Activated CD8-positive, alpha-beta memory T cell treated with anti-CD3 and anti-CD28 coated beads, Interleukin-2, amount 10 ng/mL, durations not matched to agents 7 days and 5 days (primary cell): ENCODE measurements at regions of chr7 and their contacts with region 1.

Region 1: GRCh38 chr7:76269895-76270294 is 32.6 kb upstream of the HSPB1 start:
- DNase-seq: no peak
- ATAC-seq: no peak
- H3K4me3 Mint-ChIP-seq: no peak overlapping the region
- H3K27ac Mint-ChIP-seq: no peak overlapping the region
- H3K4me1 Mint-ChIP-seq: peaks cover 29% of the 10 kb centered on the region
- H3K27me3 Mint-ChIP-seq: peaks cover 34% of the 10 kb centered on the region

Region 2: DNA sequence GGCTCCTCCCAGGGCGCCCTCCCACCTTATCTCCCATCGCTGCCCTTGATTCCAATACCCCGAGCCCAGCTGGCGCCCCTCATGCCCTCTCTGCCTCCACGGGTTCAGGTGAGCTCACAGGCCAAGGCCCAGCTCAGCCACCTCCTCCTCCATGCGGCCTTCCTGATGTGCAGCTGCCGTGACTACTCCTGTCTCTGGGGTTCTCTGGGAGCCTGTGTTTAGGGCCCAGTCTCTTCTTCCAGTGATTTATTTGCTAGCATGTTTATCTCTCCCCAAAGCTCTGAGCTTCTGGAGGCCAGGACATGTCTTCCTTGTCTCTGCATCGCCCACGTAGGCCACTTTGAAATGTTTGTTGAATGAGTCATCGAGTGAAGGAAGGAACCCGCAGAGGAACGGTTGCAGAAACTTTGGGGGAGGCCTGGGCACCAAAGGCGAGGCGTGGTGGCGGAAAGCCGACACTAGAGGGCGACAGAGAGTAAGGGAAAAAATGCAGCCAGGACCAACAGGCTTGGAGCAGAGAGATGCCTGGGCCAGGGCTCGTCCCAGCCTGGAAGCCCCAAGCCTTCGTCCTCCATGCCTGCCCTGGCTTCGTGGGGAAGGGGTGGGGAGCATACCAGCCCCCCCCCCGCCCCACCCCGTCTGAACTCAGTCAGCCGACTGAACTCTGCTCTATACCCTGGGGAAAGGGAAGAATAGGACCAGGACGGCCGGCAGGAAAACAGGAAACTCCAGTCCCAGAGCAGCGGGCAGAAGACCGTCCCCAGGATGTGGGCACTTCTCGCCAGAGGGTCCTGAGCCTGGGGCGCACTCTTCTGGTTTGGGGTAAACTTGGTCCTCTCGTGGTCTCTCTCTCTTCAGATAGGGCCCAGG is 21.7 kb after region 1 on chr7:
- CTCF ChIA-PET with region 1: interaction called, 12 read pairs
- DNase-seq: peak; percentile 94
- ATAC-seq: peak; percentile 96
- H3K4me3 Mint-ChIP-seq: peak overlapping the region; percentile 0
- H3K27ac Mint-ChIP-seq: peak overlapping the region; percentile 84
- H3K4me1 Mint-ChIP-seq: peaks cover 23% of the 10 kb centered on the region
- H3K27me3 Mint-ChIP-seq: no peaks in the 10 kb centered on the region